Common myeloid progenitor, CD34-positive (primary cell): ENCODE measurements at regions of chr10 and their contacts with region 1.

Region 1: DNA sequence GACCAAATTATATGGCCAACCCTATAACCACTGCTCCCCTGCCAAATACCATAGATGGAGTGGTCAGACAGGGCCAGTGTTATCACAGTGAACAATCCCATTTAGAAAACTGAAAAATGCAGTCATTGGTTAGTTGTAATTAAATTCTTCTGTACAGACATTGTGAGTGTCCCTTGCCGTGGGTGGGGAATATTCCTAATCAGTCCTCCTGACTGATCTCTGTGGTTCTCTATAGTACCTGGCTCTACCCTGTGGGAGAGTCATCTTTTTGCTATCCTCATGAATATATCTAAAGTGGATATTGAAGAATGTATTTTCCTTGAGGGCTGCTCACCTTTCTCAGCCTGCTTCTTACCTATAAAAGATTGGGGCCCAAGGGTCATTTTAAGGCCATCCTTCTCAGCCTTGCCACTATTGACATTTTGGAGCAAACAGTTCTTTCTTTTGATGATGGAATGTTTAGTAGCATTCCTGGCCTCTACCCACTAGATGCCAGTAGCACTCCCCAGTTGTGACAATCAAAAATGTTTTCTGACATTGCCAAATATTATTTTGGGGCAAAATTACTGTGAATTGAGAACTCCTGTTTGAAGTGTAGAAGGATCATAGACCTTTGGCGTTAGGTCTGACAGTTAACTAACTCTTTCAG is 110.2 kb downstream of the MAPK8 start:
- DNase-seq: peak in 1 of 3 donors; percentile 8
- H3K4me3 ChIP-seq: no peak overlapping the region
- H3K27ac ChIP-seq: no peak overlapping the region
- H3K4me1 ChIP-seq: peaks cover 0 to 7% (median 4%) of the 10 kb centered on the region in 4 experiments
- H3K27me3 ChIP-seq: no peaks in the 10 kb centered on the region

Region 2: GRCh38 chr10:48431871-48432270 is 15.2 kb after region 1 on chr10:
- CTCF ChIA-PET with region 1: interaction called, 16 read pairs
- POLR2A ChIA-PET with region 1: no interaction called
- DNase-seq: peak in 2 of 3 donors; percentile 16 to 47
- H3K4me3 ChIP-seq: no peak overlapping the region
- H3K27ac ChIP-seq: peak overlapping the region in 1 of 2 experiments; percentile 4
- H3K4me1 ChIP-seq: peaks cover 0 to 3% (median 0%) of the 10 kb centered on the region in 4 experiments
- H3K27me3 ChIP-seq: no peaks in the 10 kb centered on the region